IMR-90 (cell line): ENCODE measurements at regions of chr11 and their contacts with region 1.

Region 1: GRCh38 chr11:123233280-123233974 is 38.4 kb upstream of the CLMP start:
- DNase-seq: no peak
- ATAC-seq: 0 out of 2 replicates have a peak, but pooled peaks have one; percentile 5
- H3K4me3 ChIP-seq: no peak overlapping the region
- H3K27ac ChIP-seq: peak overlapping the region; percentile 49; the same call in 1 of the 2 replicates
- H3K4me1 ChIP-seq: peaks cover 31% of the 10 kb centered on the region
- H3K27me3 ChIP-seq: no peaks in the 10 kb centered on the region
- CTCF ChIP-seq: no peak
- POLR2A ChIP-seq: no peak
- RAD21 ChIP-seq: no peak

Region 2: GRCh38 chr11:123033895-123034294 is 199.5 kb before region 1 on chr11:
- CTCF ChIA-PET with region 1: no interaction called
- POLR2A ChIA-PET with region 1: no interaction called
- dilution Hi-C with region 1: no loop called
- in situ Hi-C with region 1: no loop called
- intact Hi-C with region 1: no loop called
- DNase-seq: no peak
- ATAC-seq: peak; percentile 42
- H3K4me3 ChIP-seq: no peak overlapping the region
- H3K27ac ChIP-seq: no peak overlapping the region
- H3K4me1 ChIP-seq: no peaks in the 10 kb centered on the region
- H3K27me3 ChIP-seq: peaks cover 8% of the 10 kb centered on the region
- CTCF ChIP-seq: peak; percentile 33; the same call in 1 of the 2 replicates
- POLR2A ChIP-seq: no peak
- RAD21 ChIP-seq: peak; percentile 21; the same call in 1 of the 2 replicates

Region 3: GRCh38 chr11:123219066-123219690 is 14.2 kb before region 1 on chr11:
- CTCF ChIA-PET with region 1: interaction called, 5 read pairs
- POLR2A ChIA-PET with region 1: no interaction called
- dilution Hi-C with region 1: no loop called
- in situ Hi-C with region 1: no loop called
- intact Hi-C with region 1: loop called (anchors 2 kb)
- DNase-seq: peak; percentile 86
- ATAC-seq: peak; percentile 94
- H3K4me3 ChIP-seq: no peak overlapping the region
- H3K27ac ChIP-seq: peak overlapping the region; percentile 86
- H3K4me1 ChIP-seq: peaks cover 18% of the 10 kb centered on the region
- H3K27me3 ChIP-seq: no peaks in the 10 kb centered on the region
- CTCF ChIP-seq: no peak
- POLR2A ChIP-seq: no peak
- RAD21 ChIP-seq: no peak